ENCODE measurements at regions of chr7 and their contacts with region 1.

Region 1: GRCh38 chr7:148262721-148263229 is 327.8 kb upstream of the C7orf33 start:
- DNase-seq: peak; percentile 90
- ATAC-seq: peak; percentile 88
- H3K4me3 Mint-ChIP-seq: peak overlapping the region; percentile 31
- H3K27ac Mint-ChIP-seq: peak overlapping the region; percentile 5; the same call in 1 of the 2 replicates
- H3K4me1 Mint-ChIP-seq: peaks cover 24% of the 10 kb centered on the region
- H3K27me3 Mint-ChIP-seq: peaks cover 9% of the 10 kb centered on the region
- CTCF ChIP-seq: peak; percentile 89

Region 2: DNA sequence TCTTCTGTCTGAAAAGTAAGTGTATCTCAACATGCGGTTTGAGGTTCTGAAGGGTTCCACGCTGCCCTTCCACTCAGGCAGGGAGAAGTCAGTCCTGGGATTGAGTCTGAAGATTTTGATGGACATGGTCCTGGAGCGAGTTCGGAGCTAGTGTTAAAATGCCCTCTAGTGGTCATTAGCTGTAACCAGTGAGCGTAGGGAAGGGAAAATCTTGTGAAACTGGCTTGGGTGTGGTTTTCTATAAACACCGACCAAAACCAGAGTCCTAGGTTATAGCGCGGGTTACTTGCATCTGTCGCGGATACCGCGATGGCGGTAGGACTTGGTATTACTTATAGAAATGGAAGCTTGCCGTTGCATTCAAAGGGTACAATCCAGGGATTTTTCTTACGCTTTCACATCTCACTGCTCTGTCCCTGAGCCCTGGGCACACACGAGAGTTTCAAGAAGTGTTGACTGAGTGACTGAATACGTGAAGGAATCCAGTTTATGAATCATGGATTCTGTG is 20.4 kb before region 1 on chr7:
- CTCF ChIA-PET with region 1: interaction called, 36 read pairs
- POLR2A ChIA-PET with region 1: no interaction called
- DNase-seq: peak; percentile 23
- ATAC-seq: peak; percentile 95
- H3K4me3 Mint-ChIP-seq: peak overlapping the region; percentile 14; the same call in 1 of the 2 replicates
- H3K27ac Mint-ChIP-seq: no peak overlapping the region
- H3K4me1 Mint-ChIP-seq: peaks cover 12% of the 10 kb centered on the region
- H3K27me3 Mint-ChIP-seq: peaks cover 9% of the 10 kb centered on the region
- CTCF ChIP-seq: peak; percentile 78

Region 3: DNA sequence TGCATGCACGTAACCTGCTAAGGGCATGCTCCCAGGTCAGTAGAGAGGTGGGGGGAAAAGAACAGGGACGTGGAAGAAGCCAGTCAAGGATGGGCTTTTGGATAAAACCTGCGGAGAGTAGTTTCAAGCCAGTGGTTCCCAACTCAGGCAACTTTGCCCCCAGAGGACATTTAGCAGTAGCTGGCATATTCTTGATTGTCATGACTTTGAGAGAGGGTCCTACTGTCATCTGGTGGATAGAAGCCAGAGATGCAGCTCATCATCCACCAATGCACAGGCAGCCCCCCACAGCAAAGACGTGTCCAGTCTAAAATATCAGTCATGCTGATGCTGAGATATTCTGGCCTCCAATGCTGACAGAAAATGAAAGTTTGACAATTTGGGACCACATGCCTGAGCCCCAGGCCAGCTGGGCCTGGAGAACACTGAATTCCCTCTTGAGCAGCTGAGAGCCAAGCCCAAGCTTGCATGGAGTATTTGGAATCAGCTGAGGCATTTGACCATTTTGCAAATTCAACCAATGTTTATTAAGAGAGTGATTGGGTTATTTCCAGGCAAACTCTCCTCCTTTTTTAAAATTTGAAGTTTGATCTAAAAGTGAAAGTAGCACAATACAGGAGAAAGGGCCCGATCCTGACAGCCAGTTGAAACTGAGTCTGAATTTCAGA is 217.8 kb after region 1 on chr7:
- CTCF ChIA-PET with region 1: interaction called, 37 read pairs
- POLR2A ChIA-PET with region 1: no interaction called
- DNase-seq: no peak
- ATAC-seq: no peak; the same call in 1 of the 2 replicates
- H3K4me3 Mint-ChIP-seq: no peak overlapping the region
- H3K27ac Mint-ChIP-seq: no peak overlapping the region
- H3K4me1 Mint-ChIP-seq: peaks cover 25% of the 10 kb centered on the region
- H3K27me3 Mint-ChIP-seq: no peaks in the 10 kb centered on the region; the same call in 1 of the 2 replicates
- CTCF ChIP-seq: no peak

Region 4: GRCh38 chr7:148500978-148501377 is 238.2 kb after region 1 on chr7:
- CTCF ChIA-PET with region 1: interaction called, 12 read pairs
- POLR2A ChIA-PET with region 1: no interaction called
- DNase-seq: no peak
- ATAC-seq: no peak
- H3K4me3 Mint-ChIP-seq: peak overlapping the region; percentile 30; the same call in 1 of the 2 replicates
- H3K27ac Mint-ChIP-seq: no peak overlapping the region
- H3K4me1 Mint-ChIP-seq: peaks cover 36% of the 10 kb centered on the region
- H3K27me3 Mint-ChIP-seq: no peaks in the 10 kb centered on the region
- CTCF ChIP-seq: no peak